ENCODE measurements at regions of chr18 and their contacts with region 1.

Region 1: DNA sequence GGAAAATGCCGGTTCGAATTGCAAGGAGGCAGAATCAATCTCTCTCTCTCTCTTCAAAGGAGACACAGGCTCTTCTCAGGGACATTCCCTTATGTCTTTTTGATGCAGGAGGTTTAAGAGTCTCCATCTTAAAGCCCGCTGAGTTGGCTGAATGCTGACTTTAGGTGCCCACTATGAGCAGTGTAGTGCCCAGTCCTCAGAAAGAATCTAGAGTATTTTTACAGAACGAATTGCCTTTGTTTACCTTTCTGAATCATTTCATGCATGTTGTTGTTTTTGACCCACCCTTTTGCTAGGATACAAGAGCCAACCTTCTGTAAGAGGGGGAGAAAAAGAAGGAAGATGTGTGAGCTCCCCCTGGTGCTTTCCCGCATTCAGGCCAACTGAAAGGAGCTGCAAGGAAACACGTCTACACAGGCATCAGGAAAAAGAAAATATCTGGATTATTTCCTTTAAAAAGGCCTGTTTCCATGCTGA is 193.5 kb upstream of the TCF4 start:
- DNase-seq: peak; percentile 24 to 63
- ATAC-seq: peak in 7 of 8 donors; percentile 54 to 79 (median 65)
- H3K4me3 ChIP-seq: no peak overlapping the region
- H3K27ac ChIP-seq: peak overlapping the region in 9 of 10 donors; percentile 85 to 97 (median 93)
- H3K4me1 ChIP-seq: peaks cover 0 to 42% (median 28%) of the 10 kb centered on the region in 9 donors
- H3K27me3 ChIP-seq: peaks cover 0 to 8% (median 0%) of the 10 kb centered on the region in 7 donors
- CTCF ChIP-seq: peak; percentile 37 to 78 (median 66)

Region 2: DNA sequence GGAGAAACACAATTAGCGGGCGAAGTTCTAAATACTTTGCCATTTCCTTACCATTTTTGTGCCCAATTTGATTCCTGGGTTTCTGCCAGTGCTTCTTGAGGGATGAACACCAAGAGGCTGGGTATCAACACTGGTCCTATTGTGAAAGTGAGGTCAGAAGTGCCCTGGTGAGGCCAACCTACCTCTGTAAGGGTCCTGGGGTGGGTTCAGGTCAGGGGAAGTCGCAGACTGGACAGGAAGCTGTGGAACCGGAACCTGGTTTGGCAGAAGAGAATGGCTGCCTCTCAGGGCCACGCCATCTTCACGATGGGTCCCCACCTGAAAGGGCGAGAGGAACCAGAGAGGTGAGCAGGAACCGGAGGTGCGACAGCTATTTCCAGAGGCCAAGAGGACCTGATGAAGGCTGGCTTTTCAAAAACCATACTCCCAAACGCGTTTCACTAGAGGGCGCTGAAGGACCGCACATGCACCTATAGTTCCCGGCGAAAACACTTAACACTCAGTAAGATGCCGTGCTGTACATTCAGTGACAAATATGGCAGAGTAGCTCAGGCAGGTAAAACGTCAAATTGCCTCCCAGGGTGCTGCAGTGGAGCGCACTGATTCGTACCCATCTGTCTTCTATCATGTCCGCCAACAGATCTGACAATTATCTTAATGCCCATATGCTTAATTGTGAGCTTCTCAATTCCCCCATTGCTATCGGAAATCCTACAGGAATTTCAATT is 547.0 kb before region 1 on chr18:
- intact Hi-C with region 1: loop called in 9 of 10 experiments (anchors 2 to 10 kb)
- DNase-seq: peak; percentile 60 to 85
- ATAC-seq: peak; percentile 59 to 92 (median 86)
- H3K4me3 ChIP-seq: peak overlapping the region in 1 of 10 donors; percentile 3
- H3K27ac ChIP-seq: peak overlapping the region; percentile 39 to 89 (median 62)
- H3K4me1 ChIP-seq: peaks cover 3 to 63% (median 42%) of the 10 kb centered on the region in 9 donors
- H3K27me3 ChIP-seq: no peaks in the 10 kb centered on the region
- CTCF ChIP-seq: peak; percentile 59 to 84 (median 76)

Region 3: GRCh38 chr18:55343396-55344073 is 438.0 kb before region 1 on chr18:
- intact Hi-C with region 1: loop called in 6 of 10 experiments (anchors 5 to 10 kb)
- DNase-seq: no peak
- ATAC-seq: peak in 5 of 8 donors; percentile 46 to 67 (median 57)
- H3K4me3 ChIP-seq: no peak overlapping the region
- H3K27ac ChIP-seq: peak overlapping the region in 1 of 10 donors; percentile 1
- H3K4me1 ChIP-seq: peaks cover 2 to 66% (median 24%) of the 10 kb centered on the region in 9 donors
- H3K27me3 ChIP-seq: no peaks in the 10 kb centered on the region
- CTCF ChIP-seq: peak; percentile 24 to 73 (median 61)

Region 4: DNA sequence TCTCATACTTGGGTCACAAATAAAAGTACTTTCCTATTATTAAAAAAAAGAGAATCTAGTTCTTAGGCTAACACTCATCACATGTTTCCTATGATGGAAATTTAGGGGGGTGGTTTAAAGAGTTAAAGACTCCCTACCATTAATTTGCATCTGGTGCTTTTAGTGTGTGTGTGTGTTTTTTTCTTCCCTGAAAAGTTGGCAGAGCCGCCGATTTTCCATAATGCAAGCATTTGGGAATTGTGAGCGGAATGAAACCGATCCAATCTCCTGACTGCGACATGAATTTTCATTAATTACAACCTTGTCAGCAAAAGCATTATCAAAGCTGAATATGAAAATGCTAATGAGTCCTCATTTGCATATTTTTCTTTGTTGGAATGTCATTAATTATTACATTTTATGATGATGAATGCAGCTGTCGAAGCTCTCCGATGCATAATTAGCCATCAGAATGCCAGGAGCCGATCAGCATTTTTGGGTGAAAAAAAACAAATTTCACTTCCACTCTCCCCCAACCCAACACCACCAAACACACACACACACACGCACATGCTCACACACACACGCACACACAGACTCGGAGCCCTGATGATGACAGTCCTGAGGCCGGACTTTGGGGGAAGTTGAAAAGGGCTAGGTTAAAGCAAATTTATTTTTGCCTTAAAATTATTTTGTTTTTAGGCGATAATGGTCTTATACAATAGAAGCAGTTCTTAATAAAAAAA is 358.9 kb before region 1 on chr18:
- intact Hi-C with region 1: loop called in 9 of 10 experiments (anchors 2 to 10 kb)
- DNase-seq: peak; percentile 27 to 82
- ATAC-seq: peak in 6 of 8 donors; percentile 56 to 75 (median 68)
- H3K4me3 ChIP-seq: peak overlapping the region in 9 of 10 donors; percentile 15 to 53 (median 46)
- H3K27ac ChIP-seq: peak overlapping the region; percentile 73 to 92 (median 80)
- H3K4me1 ChIP-seq: peaks cover 0 to 46% (median 25%) of the 10 kb centered on the region in 9 donors
- H3K27me3 ChIP-seq: no peaks in the 10 kb centered on the region
- CTCF ChIP-seq: no peak

Region 5: GRCh38 chr18:55546851-55547704 is 234.4 kb before region 1 on chr18:
- intact Hi-C with region 1: no loop called
- DNase-seq: peak in 1 of 2 donors; percentile 26
- ATAC-seq: peak in 6 of 8 donors; percentile 68 to 81 (median 76)
- H3K4me3 ChIP-seq: peak overlapping the region in 1 of 10 donors; percentile 1
- H3K27ac ChIP-seq: peak overlapping the region in 6 of 10 donors; percentile 0 to 43 (median 34)
- H3K4me1 ChIP-seq: peaks cover 0 to 34% (median 21%) of the 10 kb centered on the region in 9 donors
- H3K27me3 ChIP-seq: no peaks in the 10 kb centered on the region
- CTCF ChIP-seq: no peak

Region 6: DNA sequence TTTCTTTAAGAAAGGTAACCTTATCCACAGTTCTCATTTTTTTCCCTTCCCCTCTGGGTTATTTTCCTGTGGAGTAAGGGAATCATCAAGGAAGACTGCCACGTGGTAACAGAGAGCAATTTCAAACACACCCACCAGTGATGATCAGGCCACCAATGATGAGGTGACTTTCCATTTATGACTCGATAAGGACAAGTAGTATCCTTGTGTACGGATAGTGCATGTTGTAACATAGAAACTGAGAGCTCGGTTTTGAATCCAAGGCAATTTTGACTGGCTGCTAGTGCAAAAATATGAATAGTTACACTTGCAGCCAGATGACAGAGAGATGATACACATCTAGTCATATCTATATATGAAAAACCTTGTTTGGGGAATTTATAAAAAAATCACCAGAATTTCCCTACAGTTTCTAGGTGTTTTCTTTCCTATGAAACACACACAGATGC is 49.9 kb before region 1 on chr18:
- intact Hi-C with region 1: loop called in 2 of 10 experiments (anchors 5 kb)
- DNase-seq: no peak
- ATAC-seq: peak in 5 of 8 donors; percentile 31 to 61 (median 46)
- H3K4me3 ChIP-seq: no peak overlapping the region
- H3K27ac ChIP-seq: peak overlapping the region; percentile 16 to 84 (median 56)
- H3K4me1 ChIP-seq: peaks cover 0 to 21% (median 17%) of the 10 kb centered on the region in 9 donors
- H3K27me3 ChIP-seq: no peaks in the 10 kb centered on the region
- CTCF ChIP-seq: no peak

Region 7: DNA sequence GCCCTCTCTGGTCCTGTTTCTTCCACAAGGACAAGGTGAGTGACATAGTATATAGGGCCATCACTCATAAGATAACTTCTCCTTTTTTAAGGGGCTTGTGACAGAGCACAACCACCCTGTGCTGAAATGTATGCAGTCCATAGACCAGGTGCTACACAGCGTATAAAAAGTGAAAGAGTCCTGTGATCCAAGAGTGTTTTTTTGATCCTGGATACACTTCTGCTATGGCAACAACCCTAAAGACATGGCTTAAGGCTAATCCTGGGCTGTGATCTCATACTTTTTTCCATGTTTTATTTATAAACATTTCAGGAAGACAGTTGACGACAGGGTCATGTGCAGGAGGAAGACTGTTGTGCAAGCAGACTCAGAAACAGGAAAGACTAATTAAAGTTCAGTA is 207.0 kb after region 1 on chr18:
- intact Hi-C with region 1: loop called in 2 of 10 experiments (anchors 10 kb)
- DNase-seq: peak in 1 of 2 donors; percentile 71
- ATAC-seq: peak; percentile 86 to 98 (median 94)
- H3K4me3 ChIP-seq: no peak overlapping the region
- H3K27ac ChIP-seq: peak overlapping the region in 9 of 10 donors; percentile 12 to 88 (median 63)
- H3K4me1 ChIP-seq: peaks cover 0 to 14% (median 5%) of the 10 kb centered on the region in 9 donors
- H3K27me3 ChIP-seq: no peaks in the 10 kb centered on the region
- CTCF ChIP-seq: no peak

Measured in heart right ventricle (tissue), 16 donors.